Activated CD4-positive, alpha-beta T cell treated with anti-CD3 and anti-CD28 coated beads for 36 hours (primary cell): ENCODE measurements at regions of chr2 and their contacts with region 1.

Region 1: GRCh38 chr2:6401301-6401700 is 464.4 kb downstream of the CMPK2 start:
- DNase-seq: no peak
- ATAC-seq: no peak
- H3K4me3 Mint-ChIP-seq: no peak overlapping the region
- H3K27ac Mint-ChIP-seq: no peak overlapping the region
- H3K4me1 Mint-ChIP-seq: no peaks in the 10 kb centered on the region
- H3K27me3 Mint-ChIP-seq: no peaks in the 10 kb centered on the region

Region 2: GRCh38 chr2:6423157-6423556 is 21.9 kb after region 1 on chr2:
- CTCF ChIA-PET with region 1: no interaction called
- POLR2A ChIA-PET with region 1: no interaction called
- intact Hi-C with region 1: loop called in 1 of 2 experiments (anchors 1 kb)
- DNase-seq: no peak
- ATAC-seq: no peak
- H3K4me3 Mint-ChIP-seq: no peak overlapping the region
- H3K27ac Mint-ChIP-seq: no peak overlapping the region
- H3K4me1 Mint-ChIP-seq: no peaks in the 10 kb centered on the region
- H3K27me3 Mint-ChIP-seq: peaks cover 2% of the 10 kb centered on the region

Region 3: DNA sequence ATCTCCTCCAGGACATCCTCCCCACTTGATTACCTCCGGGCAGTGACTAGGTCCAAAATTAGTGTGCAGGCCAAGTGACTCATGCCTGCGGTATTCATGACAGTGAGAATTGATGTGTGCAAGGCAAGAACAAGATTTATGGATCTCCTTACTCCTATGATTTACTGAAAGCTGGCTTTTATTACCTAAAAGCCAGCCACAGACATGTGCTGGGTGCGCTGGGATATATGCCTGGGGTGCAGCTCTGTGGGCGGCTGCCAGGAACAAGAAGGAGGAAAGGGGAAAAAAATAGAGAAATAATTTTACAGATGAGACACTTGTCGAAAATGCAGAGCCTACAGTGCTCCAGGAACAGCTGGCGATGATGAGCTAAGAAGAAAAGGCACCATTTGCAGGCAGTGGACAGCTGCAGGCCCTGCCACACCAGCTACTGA is 105.1 kb after region 1 on chr2:
- CTCF ChIA-PET with region 1: no interaction called
- POLR2A ChIA-PET with region 1: no interaction called
- intact Hi-C with region 1: no loop called
- DNase-seq: no peak
- ATAC-seq: no peak
- H3K4me3 Mint-ChIP-seq: no peak overlapping the region
- H3K27ac Mint-ChIP-seq: no peak overlapping the region
- H3K4me1 Mint-ChIP-seq: no peaks in the 10 kb centered on the region
- H3K27me3 Mint-ChIP-seq: no peaks in the 10 kb centered on the region

Region 4: GRCh38 chr2:6590442-6590841 is 189.1 kb after region 1 on chr2:
- CTCF ChIA-PET with region 1: no interaction called
- POLR2A ChIA-PET with region 1: no interaction called
- intact Hi-C with region 1: no loop called
- DNase-seq: no peak
- ATAC-seq: no peak
- H3K4me3 Mint-ChIP-seq: no peak overlapping the region
- H3K27ac Mint-ChIP-seq: no peak overlapping the region
- H3K4me1 Mint-ChIP-seq: no peaks in the 10 kb centered on the region
- H3K27me3 Mint-ChIP-seq: no peaks in the 10 kb centered on the region

Region 5: DNA sequence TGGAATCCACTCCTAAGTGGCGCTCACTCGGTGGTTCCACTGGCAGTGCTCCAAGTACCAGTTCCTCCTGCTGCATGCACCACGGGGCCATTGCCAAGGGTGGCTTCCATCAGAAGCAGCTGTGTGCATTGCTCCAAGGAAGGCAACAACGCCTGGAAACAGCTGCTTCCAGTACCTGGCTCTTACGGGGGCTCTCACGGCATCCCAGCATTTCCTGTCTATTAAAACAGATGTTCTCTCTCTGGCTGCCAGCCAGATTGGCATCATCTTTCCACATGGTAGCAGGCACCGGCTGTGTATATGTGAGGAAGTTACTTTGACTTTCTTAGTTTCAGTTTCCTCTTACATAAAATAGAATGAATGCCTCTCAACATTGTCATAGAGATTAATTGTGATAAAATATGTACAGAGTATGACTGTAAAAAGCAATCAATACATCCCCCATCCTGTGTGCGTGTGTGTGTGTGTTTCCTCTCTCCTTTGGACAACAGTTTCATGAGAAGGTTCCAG is 379.5 kb after region 1 on chr2:
- CTCF ChIA-PET with region 1: no interaction called
- POLR2A ChIA-PET with region 1: no interaction called
- intact Hi-C with region 1: no loop called
- DNase-seq: peak; percentile 55
- ATAC-seq: peak; percentile 89
- H3K4me3 Mint-ChIP-seq: no peak overlapping the region
- H3K27ac Mint-ChIP-seq: no peak overlapping the region
- H3K4me1 Mint-ChIP-seq: peaks cover 10% of the 10 kb centered on the region
- H3K27me3 Mint-ChIP-seq: no peaks in the 10 kb centered on the region